ENCODE measurements at regions of chr5 and their contacts with region 1.

Region 1: DNA sequence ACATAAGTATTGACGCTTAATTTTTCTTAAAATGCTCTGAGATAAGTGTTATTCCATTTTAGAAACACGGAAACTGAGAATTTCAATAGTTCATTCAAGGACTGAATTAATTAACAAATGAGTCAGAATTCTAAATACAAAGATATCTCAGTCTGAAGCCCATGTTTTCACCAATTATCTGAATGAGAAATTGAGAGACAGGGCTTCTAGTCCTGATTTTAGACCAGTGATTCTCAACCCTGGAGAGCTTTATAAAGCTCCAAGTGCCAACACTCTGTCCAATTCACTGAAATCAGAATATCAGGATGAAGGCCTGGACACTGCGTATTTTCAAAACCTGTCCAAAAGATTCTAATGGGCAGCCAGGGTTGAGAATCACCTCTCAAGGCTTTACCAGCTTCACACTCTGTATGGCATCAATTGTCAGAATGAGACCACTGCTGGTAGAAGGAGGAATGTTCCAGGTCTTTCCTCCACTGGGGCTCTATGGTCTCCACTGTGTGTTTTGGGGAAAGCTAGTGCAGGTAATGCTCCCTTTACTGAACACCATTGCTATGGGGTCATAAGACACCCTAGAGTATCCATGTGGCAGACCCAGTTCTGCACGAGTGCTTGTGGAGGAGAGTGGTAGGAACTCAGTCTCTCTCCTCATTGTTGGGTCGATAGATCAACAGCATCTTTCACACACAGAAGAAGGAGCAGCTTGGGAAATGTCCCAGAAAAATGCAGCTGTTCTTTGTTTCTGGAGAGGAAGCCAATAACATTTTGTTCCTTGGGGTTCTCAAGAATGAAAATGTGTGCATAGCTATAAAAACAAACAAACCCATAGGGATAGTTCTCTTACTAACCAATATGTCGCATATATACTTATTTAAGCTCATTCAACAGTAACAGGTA is 99.7 kb upstream of the OSMR start:
- DNase-seq: no peak
- ATAC-seq: no peak

Region 2: DNA sequence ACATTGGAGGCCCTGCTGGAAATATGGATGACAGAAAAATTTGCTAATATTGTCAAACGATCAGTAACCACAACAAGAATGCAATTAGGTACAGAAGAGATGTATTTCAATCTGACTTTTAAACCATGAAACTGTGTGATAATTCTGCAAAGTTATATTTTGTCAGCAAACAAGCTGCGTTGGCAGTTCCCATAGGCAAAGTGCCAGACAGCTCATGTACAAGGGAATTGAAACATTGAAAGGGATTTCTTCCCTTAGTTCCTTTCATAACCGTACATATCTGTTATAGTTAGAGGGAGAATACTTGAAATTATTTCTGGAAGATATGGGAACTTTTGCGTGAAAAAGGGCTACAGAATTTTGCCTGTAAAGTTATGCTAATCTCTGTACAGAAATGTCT is 1514.3 kb after region 1 on chr5:
- intact Hi-C with region 1: loop called (anchors 10 kb)
- DNase-seq: peak; percentile 58
- ATAC-seq: no peak